ENCODE measurements at regions of chr13 and their contacts with region 1.

Region 1: DNA sequence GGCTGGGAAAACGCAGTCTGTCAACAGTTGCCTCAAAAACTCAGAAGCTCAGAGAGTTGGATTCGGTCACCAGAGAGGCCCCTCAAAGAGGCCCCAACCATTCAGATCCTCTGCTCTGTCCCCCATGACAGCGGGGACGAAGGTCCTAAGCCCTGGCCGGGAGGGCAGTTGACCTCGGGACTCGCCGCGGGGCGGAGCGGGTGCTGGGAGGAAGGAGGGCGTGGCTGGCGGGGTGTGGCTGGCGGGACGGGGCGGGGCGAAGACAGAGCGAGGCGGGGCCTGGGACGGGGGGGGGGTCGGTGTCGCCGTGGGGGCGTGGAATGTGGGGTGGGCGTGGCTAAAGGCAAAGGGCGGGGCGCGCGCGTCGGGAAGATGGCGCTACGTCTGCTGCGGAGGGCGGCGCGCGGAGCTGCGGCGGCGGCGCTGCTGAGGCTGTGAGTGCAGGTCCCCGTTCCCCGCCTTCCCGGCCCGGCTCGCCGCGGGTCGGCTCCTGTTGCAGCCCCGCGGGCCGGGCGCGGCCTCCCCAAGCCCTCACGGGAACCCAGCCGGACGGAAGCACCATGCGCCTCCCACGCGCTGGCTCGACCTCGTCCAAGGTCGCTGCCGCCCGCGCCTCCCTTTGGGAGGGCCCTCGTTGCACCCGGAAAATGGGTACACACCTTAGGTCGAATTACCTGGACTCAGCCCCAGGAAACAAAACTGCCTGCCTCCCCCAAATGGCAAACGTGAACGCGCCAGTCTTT is 105.2 kb downstream of the TM9SF2 start:
- DNase-seq: peak; percentile 77 to 88 (median 83)
- H3K4me3 ChIP-seq: peak within 1 kb of the TSS; percentile 72 to 84 (median 74)
- H3K4me3 Mint-ChIP-seq: peak within 1 kb of the TSS; percentile 87 to 93
- H3K27ac ChIP-seq: peak within 1 kb of the TSS; percentile 32 to 71
- H3K27ac Mint-ChIP-seq: peak within 1 kb of the TSS in 6 of 7 donors; percentile 35 to 87 (median 65)
- H3K4me1 ChIP-seq: peaks cover 12 to 18% of the 10 kb centered on the region in 2 donors
- H3K4me1 Mint-ChIP-seq: peaks cover 18% of the 10 kb centered on the region
- H3K27me3 ChIP-seq: no peaks in the 10 kb centered on the region
- H3K27me3 Mint-ChIP-seq: peaks cover 3 to 14% (median 12%) of the 10 kb centered on the region in 3 donors
- CTCF ChIP-seq: no peak

Region 2: DNA sequence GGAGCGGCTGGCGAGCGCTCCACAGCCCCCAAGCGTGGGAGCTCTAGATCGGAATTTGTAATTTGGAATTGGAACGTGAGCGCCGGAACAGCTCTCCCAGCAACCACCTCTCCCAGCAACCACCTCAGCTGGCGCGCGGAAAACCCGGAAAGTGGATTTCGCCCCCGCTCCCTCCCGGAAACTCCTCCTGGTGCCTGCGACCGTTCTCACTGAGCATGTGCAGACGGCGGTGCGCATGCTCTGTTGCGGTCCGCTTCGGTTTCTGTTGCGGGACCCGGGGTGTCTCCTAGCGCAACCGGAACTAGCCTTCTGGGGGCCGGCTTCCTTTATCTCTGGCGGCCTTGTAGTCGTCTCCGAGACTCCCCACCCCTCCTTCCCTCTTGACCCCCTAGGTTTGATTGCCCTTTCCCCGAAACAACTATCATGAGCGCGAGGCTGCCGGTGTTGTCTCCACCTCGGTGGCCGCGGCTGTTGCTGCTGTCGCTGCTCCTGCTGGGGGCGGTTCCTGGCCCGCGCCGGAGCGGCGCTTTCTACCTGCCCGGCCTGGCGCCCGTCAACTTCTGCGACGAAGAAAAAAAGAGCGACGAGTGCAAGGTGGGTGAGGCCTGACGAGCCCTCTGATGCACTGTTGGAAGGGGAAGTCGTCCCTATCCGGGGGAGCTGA is 105.2 kb before region 1 on chr13 and contains the start of gene TM9SF2:
- intact Hi-C with region 1: loop called in 1 of 2 experiments (anchors 10 kb)
- DNase-seq: peak; percentile 96 to 97 (median 97)
- H3K4me3 ChIP-seq: peak within 1 kb of the TSS; percentile 88 to 98 (median 90)
- H3K4me3 Mint-ChIP-seq: peak within 1 kb of the TSS; percentile 97
- H3K27ac ChIP-seq: peak within 1 kb of the TSS; percentile 90 to 95
- H3K27ac Mint-ChIP-seq: peak within 1 kb of the TSS; percentile 95 to 98 (median 98)
- H3K4me1 ChIP-seq: peaks cover 66 to 84% of the 10 kb centered on the region in 2 donors
- H3K4me1 Mint-ChIP-seq: peaks cover 67% of the 10 kb centered on the region
- H3K27me3 ChIP-seq: no peaks in the 10 kb centered on the region
- H3K27me3 Mint-ChIP-seq: peaks cover 0 to 1% (median 0%) of the 10 kb centered on the region in 3 donors
- CTCF ChIP-seq: no peak
- polyA plus RNA-seq, gene TM9SF2: 54.0 to 255 (median 218) TPM

Measured in CD14-positive monocyte (primary cell).